ENCODE measurements at regions of chr5 and their contacts with region 1.

Region 1: DNA sequence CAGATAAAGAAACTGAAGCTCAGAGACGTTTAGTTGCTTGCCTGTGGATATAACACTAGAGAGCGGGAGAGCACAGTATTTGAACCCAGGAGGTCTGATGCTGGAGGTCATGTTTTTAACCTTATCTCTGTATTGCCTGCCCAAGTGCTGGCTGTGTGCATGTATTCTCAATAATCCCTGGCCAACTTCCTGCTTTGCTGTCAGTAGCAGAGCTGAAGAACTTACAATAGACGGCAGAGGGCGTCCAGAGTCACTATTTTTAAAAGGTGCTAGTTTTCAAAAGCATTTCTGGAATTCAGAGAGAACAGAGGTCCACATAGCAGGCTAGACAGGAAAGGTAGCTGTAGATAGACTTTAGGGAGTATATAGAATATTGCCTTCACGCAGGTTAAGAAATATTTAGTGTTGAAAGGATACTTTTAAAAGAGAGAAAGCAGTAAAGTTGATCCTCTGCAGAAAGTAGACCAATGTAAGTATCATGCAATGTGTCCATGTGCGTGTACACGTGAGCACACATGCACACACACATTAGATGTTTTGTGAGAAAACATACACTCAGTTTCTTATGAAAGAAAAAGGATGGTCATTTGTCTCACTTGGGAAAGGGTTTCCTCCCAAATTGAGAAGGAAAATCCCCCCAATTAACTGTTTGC is 46.3 kb downstream of the PTCD2 start:
- DNase-seq: peak in 1 of 2 donors; percentile 73
- ATAC-seq: peak; percentile 89
- H3K4me3 ChIP-seq: no peak overlapping the region
- H3K27ac ChIP-seq: no peak overlapping the region
- H3K4me1 ChIP-seq: peaks cover 0 to 4% of the 10 kb centered on the region in 2 donors
- H3K27me3 ChIP-seq: no peaks in the 10 kb centered on the region

Region 2: DNA sequence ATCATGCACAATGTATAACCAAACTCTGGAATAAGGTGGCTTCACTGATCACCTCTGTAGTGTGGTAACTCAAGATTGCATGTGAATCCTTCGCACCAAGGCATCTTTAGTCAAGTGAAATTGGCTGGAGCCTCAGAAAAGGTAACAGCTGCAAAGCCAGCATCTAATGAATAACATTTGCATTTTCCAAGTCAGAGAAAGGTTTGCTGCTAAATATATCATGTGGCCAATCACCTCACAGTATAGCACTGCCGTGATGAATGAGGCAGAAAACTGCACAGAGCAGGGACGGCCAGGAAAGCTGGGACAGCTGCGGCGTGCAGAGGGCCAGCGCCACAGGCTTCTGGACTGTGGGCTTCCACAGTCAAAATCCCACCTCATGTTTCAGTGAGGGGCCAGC is 64.9 kb before region 1 on chr5:
- intact Hi-C with region 1: no loop called
- DNase-seq: no peak
- ATAC-seq: no peak
- H3K4me3 ChIP-seq: no peak overlapping the region
- H3K27ac ChIP-seq: no peak overlapping the region
- H3K4me1 ChIP-seq: peaks cover 2 to 8% of the 10 kb centered on the region in 2 donors
- H3K27me3 ChIP-seq: no peaks in the 10 kb centered on the region

Region 3: DNA sequence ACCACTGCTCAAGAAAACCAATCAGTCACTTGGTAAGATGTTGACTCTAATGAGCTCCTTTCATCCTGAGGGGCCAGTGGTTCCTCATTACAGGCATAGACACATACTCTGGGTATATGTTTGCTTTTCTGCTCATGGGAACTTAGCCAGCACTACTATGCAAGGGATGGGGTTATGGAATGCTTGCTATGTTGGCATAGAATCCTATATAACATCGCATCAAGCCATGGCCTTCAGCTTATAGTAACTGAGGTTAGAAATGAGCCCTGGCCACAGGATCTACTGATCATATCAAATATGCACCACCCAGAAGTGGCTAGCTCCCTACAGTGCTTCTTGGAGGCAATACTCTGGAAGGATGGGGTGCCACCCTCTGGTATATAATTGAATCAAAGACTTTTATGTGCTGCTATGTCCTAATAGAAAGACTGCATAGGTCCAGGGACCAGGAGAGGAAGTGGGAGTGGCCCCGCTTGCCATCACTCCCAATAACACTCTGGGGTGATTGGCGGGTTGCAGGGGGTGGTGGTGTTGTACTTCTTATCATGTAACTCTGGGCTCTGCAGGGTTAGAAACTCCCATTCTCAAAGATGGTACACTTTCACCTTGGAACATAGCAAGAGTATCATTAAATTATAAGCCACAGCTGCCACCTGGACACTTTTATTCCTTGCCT is 70.5 kb after region 1 on chr5:
- intact Hi-C with region 1: loop called in 1 of 2 experiments (anchors 5 kb)
- DNase-seq: no peak
- ATAC-seq: no peak
- H3K4me3 ChIP-seq: no peak overlapping the region
- H3K27ac ChIP-seq: peak overlapping the region; percentile 32 to 88
- H3K4me1 ChIP-seq: peaks cover 9 to 12% of the 10 kb centered on the region in 2 donors
- H3K27me3 ChIP-seq: no peaks in the 10 kb centered on the region

Region 4: DNA sequence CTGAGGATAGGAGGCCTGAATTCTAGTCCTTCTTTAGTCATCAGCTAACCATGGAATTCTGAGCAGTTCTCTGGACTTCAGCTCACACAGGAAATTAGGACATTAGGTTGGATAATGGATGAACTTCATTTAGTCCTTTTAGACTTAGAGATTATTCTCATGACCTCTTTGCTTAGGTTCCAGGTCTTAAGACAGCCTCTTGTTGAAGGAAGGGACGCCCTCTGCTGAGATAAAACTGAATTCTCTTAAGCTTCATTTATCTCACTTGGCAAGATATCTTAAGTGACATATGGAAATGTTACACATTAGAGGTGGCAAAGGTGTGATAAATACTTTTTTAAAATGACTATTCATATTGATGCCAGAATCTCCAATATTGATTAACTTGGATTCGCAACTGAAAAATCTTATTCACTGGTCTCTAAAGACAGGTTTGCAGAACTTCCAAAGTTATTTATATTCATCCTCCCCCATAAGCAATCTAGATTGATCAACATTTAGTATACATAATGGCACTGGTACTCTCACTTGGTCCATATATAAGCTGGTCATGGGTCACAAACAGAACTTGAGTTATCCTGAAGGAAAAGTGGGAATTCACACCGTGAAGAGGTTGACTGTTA is 157.6 kb after region 1 on chr5:
- intact Hi-C with region 1: loop called (anchors 2 kb)
- DNase-seq: no peak
- ATAC-seq: no peak
- H3K4me3 ChIP-seq: no peak overlapping the region
- H3K27ac ChIP-seq: no peak overlapping the region
- H3K4me1 ChIP-seq: peaks cover 0 to under 1% of the 10 kb centered on the region in 2 donors
- H3K27me3 ChIP-seq: no peaks in the 10 kb centered on the region

Region 5: GRCh38 chr5:72597456-72597948 is 231.1 kb after region 1 on chr5:
- intact Hi-C with region 1: loop called in 1 of 2 experiments (anchors 10 kb)
- DNase-seq: no peak
- ATAC-seq: peak; percentile 68
- H3K4me3 ChIP-seq: no peak overlapping the region
- H3K27ac ChIP-seq: no peak overlapping the region
- H3K4me1 ChIP-seq: peaks cover 0 to 2% of the 10 kb centered on the region in 2 donors
- H3K27me3 ChIP-seq: no peaks in the 10 kb centered on the region

Region 6: DNA sequence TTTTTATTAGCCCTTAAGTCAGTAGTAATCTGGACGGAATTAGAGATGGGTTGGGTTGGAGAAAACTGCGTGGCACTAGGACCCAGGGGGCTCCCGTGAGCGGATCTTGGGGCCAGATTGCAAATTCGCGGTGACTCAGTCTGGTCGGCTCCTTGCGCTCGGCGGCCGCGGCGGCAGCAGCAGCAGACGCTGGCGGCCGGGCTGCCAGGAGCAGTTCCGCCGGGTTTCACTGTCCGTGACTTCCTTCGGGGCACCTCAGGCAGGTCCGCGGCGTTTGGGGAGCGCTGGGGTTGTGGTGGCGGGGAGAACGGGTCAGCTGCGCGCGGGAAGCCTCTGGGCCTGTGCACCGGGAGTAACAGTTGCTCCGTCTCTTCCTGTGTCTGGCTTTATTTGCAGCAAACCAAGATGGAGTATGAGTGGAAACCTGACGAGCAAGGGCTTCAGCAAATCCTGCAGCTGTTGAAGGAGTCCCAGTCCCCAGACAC is 481.6 kb after region 1 on chr5:
- intact Hi-C with region 1: loop called in 1 of 2 experiments (anchors 5 kb)
- DNase-seq: peak; percentile 94 to 96
- ATAC-seq: peak; percentile 95
- H3K4me3 ChIP-seq: peak overlapping the region; percentile 95 to 99
- H3K27ac ChIP-seq: peak overlapping the region; percentile 73 to 95
- H3K4me1 ChIP-seq: peaks cover 0 to 3% of the 10 kb centered on the region in 2 donors
- H3K27me3 ChIP-seq: no peaks in the 10 kb centered on the region

Measured in aorta (tissue), 5 donors.